IMR-90 (cell line): ENCODE measurements at regions of chr9 and their contacts with region 1.

Region 1: DNA sequence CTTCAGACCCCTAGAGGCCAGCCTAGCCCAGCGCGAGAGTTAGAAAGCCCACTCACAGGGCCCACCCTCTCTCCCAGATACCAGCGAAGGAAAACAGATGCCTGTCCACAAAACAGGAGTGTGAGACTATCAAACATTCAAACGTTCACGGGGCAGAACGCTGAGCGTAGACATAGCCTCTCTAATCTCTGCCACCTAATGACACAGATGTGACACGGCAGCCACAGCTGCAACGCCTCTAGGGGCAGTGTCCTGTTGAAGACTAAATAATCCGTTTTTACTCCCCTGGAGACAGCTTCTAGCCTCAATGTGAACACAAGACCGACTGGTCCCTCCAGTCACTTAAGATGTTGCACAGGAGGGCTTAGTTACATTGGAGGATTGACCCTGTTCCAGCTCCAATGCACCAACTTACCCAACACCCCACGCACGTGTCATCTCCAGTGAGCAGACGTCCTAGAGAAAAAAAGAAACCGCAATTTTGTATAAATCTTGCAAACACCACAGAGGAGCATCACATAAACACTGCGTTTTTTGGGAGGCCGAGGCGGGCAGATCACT is 14.3 kb downstream of the DIPK1B start:
- DNase-seq: peak; percentile 31
- ATAC-seq: no peak
- H3K4me3 ChIP-seq: peak overlapping the region; percentile 98
- H3K27ac ChIP-seq: 0 out of 2 replicates have a peak overlapping the region, but pooled peaks have one; percentile 19
- H3K4me1 ChIP-seq: peaks cover 15% of the 10 kb centered on the region
- H3K27me3 ChIP-seq: no peaks in the 10 kb centered on the region
- CTCF ChIP-seq: peak; percentile 36
- POLR2A ChIP-seq: no peak
- RAD21 ChIP-seq: no peak

Region 2: DNA sequence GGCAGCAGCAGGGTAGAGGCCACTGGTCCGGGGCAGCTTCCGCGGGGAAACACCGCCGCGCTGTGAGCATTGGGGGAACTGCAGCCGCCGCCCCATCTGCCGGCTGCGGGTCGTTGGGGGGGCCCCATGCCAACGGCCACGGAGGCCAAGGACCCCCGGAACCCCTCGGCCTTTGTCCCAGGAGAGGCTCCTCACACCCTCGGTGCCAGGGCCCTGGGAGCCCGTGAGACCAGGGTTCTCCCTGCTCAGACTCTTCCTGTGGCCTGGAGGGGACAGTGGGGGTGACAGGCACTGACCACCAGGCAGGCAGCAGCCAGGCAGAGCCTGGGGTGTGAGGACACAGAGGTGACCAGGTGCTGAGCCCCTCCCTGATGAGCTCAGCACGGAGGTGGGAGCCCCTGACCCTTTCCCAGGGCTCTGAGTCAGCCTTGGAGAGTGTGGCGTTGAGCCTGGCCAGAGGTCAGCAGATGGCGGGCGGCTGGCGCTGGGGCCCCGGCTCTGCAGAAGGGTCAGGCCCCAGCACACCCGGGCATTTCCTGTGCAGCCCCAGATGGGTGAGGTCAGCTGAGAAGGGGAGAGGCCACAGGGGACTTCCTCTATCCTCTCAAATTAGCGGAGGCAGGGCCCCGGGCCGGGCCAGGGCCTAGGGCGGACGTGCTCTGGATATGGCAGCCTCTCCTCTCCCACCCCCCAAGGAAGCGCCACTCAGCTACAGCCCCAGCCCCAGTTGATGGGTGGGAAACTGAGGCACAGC is 81.9 kb before region 1 on chr9:
- CTCF ChIA-PET with region 1: no interaction called
- POLR2A ChIA-PET with region 1: no interaction called
- dilution Hi-C with region 1: no loop called
- in situ Hi-C with region 1: no loop called
- intact Hi-C with region 1: no loop called
- DNase-seq: peak; percentile 28
- ATAC-seq: peak; percentile 97
- H3K4me3 ChIP-seq: no peak overlapping the region
- H3K27ac ChIP-seq: no peak overlapping the region
- H3K4me1 ChIP-seq: peaks cover 4% of the 10 kb centered on the region; the same call in 1 of the 2 replicates
- H3K27me3 ChIP-seq: peaks cover 20% of the 10 kb centered on the region
- CTCF ChIP-seq: peak; percentile 73
- POLR2A ChIP-seq: no peak
- RAD21 ChIP-seq: peak; percentile 75

Region 3: DNA sequence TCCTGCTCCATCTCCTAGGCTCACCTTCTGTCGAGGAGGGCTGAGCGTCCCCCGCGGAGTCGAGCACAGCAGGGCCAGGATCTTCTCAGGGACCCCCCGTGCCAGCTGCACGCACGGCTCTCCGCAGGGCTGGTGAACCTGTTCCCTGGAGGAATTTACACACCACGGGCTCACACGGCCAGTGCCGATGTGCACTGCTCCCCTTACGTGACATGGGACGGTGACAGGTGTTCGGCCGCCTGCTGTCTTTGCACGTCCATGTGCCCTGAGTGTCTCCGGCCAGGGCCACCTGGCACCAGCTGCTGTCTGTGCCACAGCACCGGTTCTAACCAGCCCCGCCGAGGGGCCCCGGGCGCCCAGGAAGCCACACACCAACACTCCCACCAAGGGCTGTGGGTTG is 30.8 kb before region 1 on chr9:
- CTCF ChIA-PET with region 1: no interaction called
- POLR2A ChIA-PET with region 1: no interaction called
- dilution Hi-C with region 1: no loop called
- in situ Hi-C with region 1: no loop called
- intact Hi-C with region 1: loop called (anchors 1 kb)
- DNase-seq: no peak
- ATAC-seq: no peak
- H3K4me3 ChIP-seq: no peak overlapping the region
- H3K27ac ChIP-seq: no peak overlapping the region
- H3K4me1 ChIP-seq: 0 out of 2 replicates have a peak, but pooled peaks cover 2% of the 10 kb centered on the region
- H3K27me3 ChIP-seq: peaks cover 16% of the 10 kb centered on the region
- CTCF ChIP-seq: no peak
- POLR2A ChIP-seq: no peak
- RAD21 ChIP-seq: no peak

Region 4: GRCh38 chr9:136742591-136743391 is 16.1 kb after region 1 on chr9 and contains the start of gene LCN10:
- CTCF ChIA-PET with region 1: no interaction called
- POLR2A ChIA-PET with region 1: no interaction called
- dilution Hi-C with region 1: no loop called
- in situ Hi-C with region 1: no loop called
- intact Hi-C with region 1: no loop called
- DNase-seq: no peak
- ATAC-seq: no peak; the same call in 1 of the 2 replicates
- H3K4me3 ChIP-seq: no peak within 1 kb of the TSS
- H3K27ac ChIP-seq: no peak within 1 kb of the TSS
- H3K4me1 ChIP-seq: peaks cover 3% of the 10 kb centered on the region; the same call in 1 of the 2 replicates
- H3K27me3 ChIP-seq: peaks cover 64% of the 10 kb centered on the region
- CTCF ChIP-seq: 0 out of 2 replicates have a peak, but pooled peaks have one; percentile 13
- POLR2A ChIP-seq: no peak
- RAD21 ChIP-seq: no peak
- total RNA-seq, gene LCN10: not detected in 2 replicates